ENCODE measurements at regions of chr18 and their contacts with region 1.

Region 1: GRCh38 chr18:51135795-51136194 is 61.7 kb downstream of the MEX3C start:
- DNase-seq: no peak
- H3K4me3 ChIP-seq: no peak overlapping the region
- H3K27ac ChIP-seq: no peak overlapping the region
- H3K4me1 ChIP-seq: peaks cover 0 to 5% (median 0%) of the 10 kb centered on the region in 4 experiments; a peak in 1 of 7 replicates
- H3K27me3 ChIP-seq: no peaks in the 10 kb centered on the region
- CTCF ChIP-seq: peak; percentile 26 to 66 (median 64)
- EP300 ChIP-seq: no peak
- POLR2A ChIP-seq: no peak
- RAD21 ChIP-seq: peak; percentile 53 to 65

Region 2: DNA sequence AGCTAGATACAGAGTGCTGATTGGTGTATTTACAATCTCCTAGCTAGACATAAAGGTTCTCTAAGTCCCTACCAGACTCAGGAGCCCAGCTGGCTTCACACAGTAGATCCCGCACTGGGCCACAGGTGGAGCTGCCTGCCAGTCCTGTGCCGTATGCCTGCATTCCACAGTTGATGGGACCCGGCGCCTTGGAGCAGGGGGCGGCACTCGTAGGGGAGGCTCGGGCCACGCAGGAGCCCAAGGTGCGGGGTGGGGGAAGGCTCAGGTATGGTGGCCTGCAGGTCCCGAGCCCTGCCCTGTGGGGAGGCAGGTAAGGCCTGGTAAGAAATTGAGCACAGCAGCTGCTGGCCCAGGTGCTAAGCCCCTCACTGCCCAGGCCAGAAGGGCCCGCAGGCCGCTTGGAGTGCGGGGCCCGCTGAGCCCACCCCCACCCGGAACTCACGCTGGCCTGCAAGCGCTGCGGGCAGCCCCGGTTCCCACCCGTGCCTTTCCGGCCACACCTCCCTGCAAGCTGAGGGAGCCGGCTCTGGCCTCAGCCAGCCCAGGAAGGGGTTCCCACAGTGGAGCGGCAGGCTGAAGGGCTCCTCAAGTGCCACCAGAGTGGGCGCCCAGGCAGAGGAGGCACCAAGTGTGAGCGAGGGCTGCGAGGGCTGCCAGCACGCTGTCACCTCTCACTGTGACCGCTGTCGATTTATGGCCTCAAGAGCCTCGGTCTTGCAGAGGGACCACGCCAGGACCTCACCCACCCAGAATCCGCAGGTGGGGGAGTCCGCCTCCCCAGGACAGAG is 14.8 kb before region 1 on chr18:
- CTCF ChIA-PET with region 1: interaction called, 12 read pairs
- POLR2A ChIA-PET with region 1: interaction called, 3 read pairs
- DNase-seq: no peak
- H3K4me3 ChIP-seq: no peak overlapping the region
- H3K27ac ChIP-seq: no peak overlapping the region
- H3K4me1 ChIP-seq: peaks cover 0 to 5% (median 0%) of the 10 kb centered on the region in 4 experiments; a peak in 1 of 7 replicates
- H3K27me3 ChIP-seq: no peaks in the 10 kb centered on the region
- CTCF ChIP-seq: peak; percentile 8 to 40 (median 18); a peak in 2 of 4 replicates
- EP300 ChIP-seq: no peak
- POLR2A ChIP-seq: no peak
- RAD21 ChIP-seq: peak; percentile 31 to 46; a peak in 3 of 4 replicates

Region 3: GRCh38 chr18:51197661-51198424 is 62.0 kb after region 1 on chr18 and contains the start of gene MEX3C:
- CTCF ChIA-PET with region 1: interaction called, 7 read pairs
- POLR2A ChIA-PET with region 1: interaction called, 17 read pairs
- DNase-seq: peak; percentile 98 to 99
- H3K4me3 ChIP-seq: peak within 1 kb of the TSS; percentile 97 to 100 (median 99)
- H3K27ac ChIP-seq: peak within 1 kb of the TSS; percentile 92; the same call in 1 of the 2 replicates
- H3K4me1 ChIP-seq: peaks cover 0 to 3% (median 1%) of the 10 kb centered on the region in 4 experiments; a peak in 3 of 7 replicates
- H3K27me3 ChIP-seq: no peaks in the 10 kb centered on the region
- CTCF ChIP-seq: peak; percentile 0 to 36 (median 24); a peak in 2 of 4 replicates
- EP300 ChIP-seq: no peak
- POLR2A ChIP-seq: peak; percentile 91 to 92
- RAD21 ChIP-seq: no peak
- total RNA-seq, gene MEX3C: 102 and 103 TPM in 2 replicates

Region 4: GRCh38 chr18:51278045-51278649 is 142.4 kb after region 1 on chr18:
- CTCF ChIA-PET with region 1: interaction called, 11 read pairs
- POLR2A ChIA-PET with region 1: no interaction called
- DNase-seq: peak; percentile 27 to 92
- H3K4me3 ChIP-seq: no peak overlapping the region
- H3K27ac ChIP-seq: no peak overlapping the region
- H3K4me1 ChIP-seq: peaks cover 0 to 11% (median 3%) of the 10 kb centered on the region in 4 experiments; a peak in 3 of 7 replicates
- H3K27me3 ChIP-seq: no peaks in the 10 kb centered on the region
- CTCF ChIP-seq: peak; percentile 83 to 94 (median 93)
- EP300 ChIP-seq: no peak
- POLR2A ChIP-seq: no peak
- RAD21 ChIP-seq: peak; percentile 89 to 95

Region 5: GRCh38 chr18:51330148-51330547 is 194.4 kb after region 1 on chr18:
- CTCF ChIA-PET with region 1: no interaction called
- POLR2A ChIA-PET with region 1: no interaction called
- DNase-seq: no peak
- H3K4me3 ChIP-seq: no peak overlapping the region
- H3K27ac ChIP-seq: no peak overlapping the region
- H3K4me1 ChIP-seq: no peaks in the 10 kb centered on the region
- H3K27me3 ChIP-seq: no peaks in the 10 kb centered on the region
- CTCF ChIP-seq: no peak
- EP300 ChIP-seq: no peak
- POLR2A ChIP-seq: no peak
- RAD21 ChIP-seq: no peak

Measured in H1 (cell line).